ENCODE measurements at regions of chr12 and their contacts with region 1.

Region 1: DNA sequence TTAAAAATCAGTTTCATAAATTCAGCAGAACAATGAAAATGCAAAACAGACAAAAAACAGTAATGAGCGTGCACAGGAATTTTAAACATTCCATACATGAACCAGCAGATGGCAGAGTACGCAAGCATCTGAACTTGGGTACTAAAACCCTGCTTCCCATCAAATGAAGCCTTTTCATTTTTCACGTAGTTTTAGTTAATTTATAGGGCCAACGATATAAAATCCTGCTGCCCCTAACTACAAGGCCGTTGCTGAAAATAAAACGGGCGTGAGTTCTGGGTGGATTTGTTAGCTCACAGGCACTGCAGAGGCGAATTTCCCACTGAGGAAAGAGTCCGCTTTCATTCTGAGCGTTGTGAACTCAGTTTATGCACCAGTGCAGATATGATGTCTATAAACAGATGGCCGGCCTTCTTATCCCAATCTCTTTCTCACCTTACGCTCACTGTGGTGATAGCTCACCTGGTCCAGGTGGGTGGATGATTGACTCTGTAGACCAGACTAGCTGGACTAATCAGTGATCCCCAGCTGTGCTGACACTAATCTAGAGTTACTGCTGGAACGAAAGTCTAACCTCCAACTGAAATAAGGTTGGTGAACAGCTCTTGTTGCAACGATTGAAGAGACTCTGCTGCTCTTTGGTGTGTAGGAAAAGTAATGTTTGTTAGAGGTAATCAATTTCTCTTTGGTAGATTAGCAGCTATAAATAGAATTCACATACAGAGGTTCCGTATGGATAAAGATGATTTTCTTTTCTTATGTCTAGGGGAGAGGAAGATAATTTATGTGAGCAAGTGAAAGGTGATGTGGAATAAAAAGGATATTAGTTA is 89.2 kb downstream of the PDZRN4 start:
- DNase-seq: peak; percentile 34
- H3K4me3 ChIP-seq: no peak overlapping the region; a peak in 1 of 4 replicates
- H3K27ac ChIP-seq: no peak overlapping the region
- H3K4me1 ChIP-seq: peaks cover 0 to 4% of the 10 kb centered on the region in 2 experiments; a peak in 2 of 4 replicates
- H3K27me3 ChIP-seq: no peaks in the 10 kb centered on the region
- CTCF ChIP-seq: peak; percentile 75
- EP300 ChIP-seq: no peak
- RAD21 ChIP-seq: peak; percentile 95

Region 2: DNA sequence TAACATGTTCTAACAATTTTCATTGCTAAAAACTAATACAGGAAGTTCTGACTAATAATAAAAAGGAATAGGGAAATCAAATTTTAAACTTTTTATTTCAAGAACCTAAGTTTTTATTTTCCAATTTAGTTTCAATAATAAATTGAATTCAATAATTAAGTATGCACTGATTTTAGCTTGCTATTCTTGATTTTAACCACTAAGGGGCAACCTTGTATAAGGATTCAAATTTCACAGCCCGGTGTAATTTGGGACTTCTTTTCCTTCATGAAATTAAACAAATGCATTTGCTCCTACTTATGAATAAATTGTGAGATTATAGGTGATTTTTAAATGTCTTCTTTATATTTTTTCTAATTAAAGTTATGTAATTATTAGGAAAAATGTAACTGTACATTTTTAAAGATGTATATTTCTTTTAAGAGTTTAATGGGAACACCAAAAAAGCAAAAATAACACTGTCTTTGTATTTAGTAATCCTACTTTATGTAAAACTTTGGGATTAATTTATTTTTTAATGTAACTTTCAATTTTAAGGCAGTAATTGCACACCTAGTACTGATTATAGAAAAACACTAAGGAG is 330.6 kb before region 1 on chr12:
- CTCF ChIA-PET with region 1: interaction called, 10 read pairs
- POLR2A ChIA-PET with region 1: no interaction called
- DNase-seq: peak; percentile 17
- H3K4me3 ChIP-seq: no peak overlapping the region; a peak in 1 of 4 replicates
- H3K27ac ChIP-seq: no peak overlapping the region
- H3K4me1 ChIP-seq: peaks cover 0 to 5% of the 10 kb centered on the region in 2 experiments; a peak in 2 of 4 replicates
- H3K27me3 ChIP-seq: no peaks in the 10 kb centered on the region
- CTCF ChIP-seq: peak; percentile 76
- EP300 ChIP-seq: no peak
- RAD21 ChIP-seq: peak; percentile 83

Region 3: DNA sequence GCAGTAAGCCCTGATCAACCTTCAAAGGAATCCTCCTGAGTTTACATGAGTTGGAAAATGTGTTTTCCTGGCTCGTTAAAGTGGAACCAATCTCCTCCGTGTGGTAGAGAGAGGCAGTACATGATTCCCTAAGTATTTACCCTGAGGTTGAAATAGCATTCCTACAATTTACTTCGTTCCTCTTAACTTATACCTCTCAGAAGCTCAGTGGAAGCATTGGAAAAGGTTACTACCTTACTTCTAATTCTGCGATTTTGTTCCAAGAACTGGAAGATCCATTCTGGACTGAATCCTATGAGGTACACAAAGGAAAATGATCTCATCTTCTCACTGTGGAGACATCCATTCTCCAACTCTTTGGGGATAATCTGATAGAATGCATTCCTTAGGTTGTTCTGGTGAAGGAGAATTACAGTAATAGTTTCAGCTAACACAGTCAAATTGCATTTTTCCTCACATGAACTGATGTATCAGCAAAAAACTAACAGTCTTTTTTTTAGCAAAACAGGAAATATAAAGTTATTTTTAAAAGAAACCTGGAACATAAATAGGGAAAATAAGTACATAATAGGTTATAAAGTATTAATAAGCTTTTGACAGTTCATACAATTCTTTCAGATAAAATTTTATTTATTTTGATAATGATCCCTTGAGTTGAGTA is 386.4 kb after region 1 on chr12:
- CTCF ChIA-PET with region 1: interaction called, 12 read pairs
- POLR2A ChIA-PET with region 1: no interaction called
- DNase-seq: peak; percentile 49
- H3K4me3 ChIP-seq: no peak overlapping the region
- H3K27ac ChIP-seq: no peak overlapping the region
- H3K4me1 ChIP-seq: no peaks in the 10 kb centered on the region
- H3K27me3 ChIP-seq: no peaks in the 10 kb centered on the region
- CTCF ChIP-seq: peak; percentile 65
- EP300 ChIP-seq: no peak
- RAD21 ChIP-seq: peak; percentile 73